ENCODE measurements at regions of chr3 and their contacts with region 1.

Region 1: DNA sequence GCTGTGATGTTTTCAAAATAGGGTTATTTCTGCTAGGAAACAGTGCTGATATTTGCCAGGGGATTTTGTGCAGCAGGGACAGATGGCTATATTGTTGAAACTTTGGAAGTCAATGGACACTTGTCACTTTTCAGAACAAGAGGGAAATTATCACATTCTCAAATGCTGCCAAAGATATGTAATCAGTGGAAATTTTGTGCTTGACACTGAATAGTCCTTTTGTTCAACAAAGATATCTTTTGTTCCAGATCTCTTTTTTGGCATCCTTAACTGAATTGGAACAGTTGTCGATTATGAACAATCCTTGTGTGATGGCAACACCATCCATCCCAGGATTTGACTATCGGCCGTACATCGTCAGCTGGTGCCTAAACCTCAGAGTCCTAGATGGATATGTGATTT is 7.8 kb downstream of the CEP97 start:
- DNase-seq: no peak
- H3K4me3 Mint-ChIP-seq: no peak overlapping the region
- H3K27ac Mint-ChIP-seq: no peak overlapping the region
- H3K4me1 Mint-ChIP-seq: peaks cover 13% of the 10 kb centered on the region
- H3K27me3 Mint-ChIP-seq: no peaks in the 10 kb centered on the region

Region 2: GRCh38 chr3:101588616-101589015 is 143.6 kb before region 1 on chr3:
- CTCF ChIA-PET with region 1: no interaction called
- POLR2A ChIA-PET with region 1: no interaction called
- DNase-seq: no peak
- H3K4me3 Mint-ChIP-seq: no peak overlapping the region
- H3K27ac Mint-ChIP-seq: no peak overlapping the region
- H3K4me1 Mint-ChIP-seq: peaks cover 23% of the 10 kb centered on the region
- H3K27me3 Mint-ChIP-seq: no peaks in the 10 kb centered on the region

Region 3: DNA sequence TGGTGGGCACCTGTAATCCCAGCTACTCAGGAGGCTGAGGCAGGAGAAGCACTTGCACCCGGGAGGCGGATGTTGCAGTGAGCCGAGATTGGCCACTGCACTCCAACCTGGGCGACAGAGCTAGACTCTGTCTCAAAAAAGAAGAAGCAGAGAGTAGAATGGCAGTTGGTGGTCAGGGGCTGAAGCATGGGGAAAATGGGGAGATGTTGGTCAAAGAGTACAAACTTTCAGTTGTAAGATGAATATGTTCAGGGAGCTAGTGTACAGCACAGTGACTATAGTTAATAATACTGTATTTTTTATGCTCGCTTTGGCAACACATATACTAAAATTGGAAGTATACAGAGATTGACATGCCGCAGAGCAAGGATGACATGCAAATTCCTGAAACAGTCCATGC is 116.7 kb before region 1 on chr3:
- CTCF ChIA-PET with region 1: no interaction called
- POLR2A ChIA-PET with region 1: no interaction called
- DNase-seq: no peak
- H3K4me3 Mint-ChIP-seq: no peak overlapping the region
- H3K27ac Mint-ChIP-seq: no peak overlapping the region
- H3K4me1 Mint-ChIP-seq: no peaks in the 10 kb centered on the region
- H3K27me3 Mint-ChIP-seq: no peaks in the 10 kb centered on the region

Region 4: GRCh38 chr3:101758224-101758623 is 26.0 kb after region 1 on chr3:
- CTCF ChIA-PET with region 1: no interaction called
- POLR2A ChIA-PET with region 1: interaction called, 15 read pairs
- DNase-seq: no peak
- H3K4me3 Mint-ChIP-seq: no peak overlapping the region
- H3K27ac Mint-ChIP-seq: no peak overlapping the region
- H3K4me1 Mint-ChIP-seq: peaks cover 22% of the 10 kb centered on the region
- H3K27me3 Mint-ChIP-seq: no peaks in the 10 kb centered on the region